CD4-positive, alpha-beta memory T cell (primary cell): ENCODE measurements at regions of chr12 and their contacts with region 1.

Region 1: GRCh38 chr12:76031537-76032073 is at the start of gene PHLDA1:
- DNase-seq: peak; percentile 88 to 95 (median 91)
- H3K4me3 ChIP-seq: peak within 1 kb of the TSS; percentile 69 to 84
- H3K4me3 Mint-ChIP-seq: peak within 1 kb of the TSS; percentile 90 to 98 (median 94)
- H3K27ac ChIP-seq: peak within 1 kb of the TSS; percentile 89
- H3K27ac Mint-ChIP-seq: peak within 1 kb of the TSS; percentile 94 to 98 (median 98)
- H3K4me1 ChIP-seq: peaks cover 24% of the 10 kb centered on the region
- H3K4me1 Mint-ChIP-seq: peaks cover 18 to 45% (median 31%) of the 10 kb centered on the region in 4 donors
- H3K27me3 ChIP-seq: no peaks in the 10 kb centered on the region
- H3K27me3 Mint-ChIP-seq: no peaks in the 10 kb centered on the region
- total RNA-seq, gene PHLDA1: 8.2 to 8.5 TPM

Region 2: DNA sequence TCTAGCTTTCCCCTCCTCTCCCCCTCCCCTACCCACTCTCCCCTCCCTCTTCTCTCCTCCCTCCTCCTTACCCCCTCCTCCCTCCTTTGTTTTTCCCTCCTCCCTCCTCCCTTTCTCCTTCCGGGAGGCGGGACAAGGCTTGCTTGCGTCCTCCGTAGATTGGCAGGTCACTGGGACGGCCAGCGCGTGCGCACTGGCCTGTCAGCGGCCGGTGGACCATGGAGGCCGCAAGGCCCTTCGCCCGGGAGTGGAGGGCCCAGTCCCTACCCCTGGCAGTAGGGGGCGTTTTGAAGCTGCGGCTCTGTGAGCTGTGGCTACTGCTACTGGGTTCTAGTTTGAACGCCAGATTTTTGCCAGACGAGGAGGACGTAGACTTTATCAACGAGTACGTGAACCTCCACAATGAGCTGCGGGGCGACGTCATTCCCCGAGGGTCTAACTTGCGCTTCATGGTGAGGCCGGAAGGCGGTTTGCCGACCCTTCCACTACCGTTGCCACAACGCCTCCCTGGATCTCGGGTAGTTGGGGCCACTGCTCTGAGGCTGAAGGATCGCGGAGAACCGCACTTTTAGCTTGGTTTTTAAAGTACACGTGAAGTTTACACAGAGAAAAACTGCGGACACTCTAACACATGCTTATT is 640.6 kb before region 1 on chr12 and contains the start of gene GLIPR1L2:
- CTCF ChIA-PET with region 1: no interaction called
- POLR2A ChIA-PET with region 1: interaction called, 18 read pairs
- intact Hi-C with region 1: loop called (anchors 5 kb)
- DNase-seq: peak; percentile 82 to 86 (median 84)
- H3K4me3 ChIP-seq: peak within 1 kb of the TSS; percentile 69 to 74
- H3K4me3 Mint-ChIP-seq: peak within 1 kb of the TSS; percentile 90 to 97 (median 93)
- H3K27ac ChIP-seq: peak within 1 kb of the TSS; percentile 74
- H3K27ac Mint-ChIP-seq: peak within 1 kb of the TSS; percentile 96 to 99 (median 97)
- H3K4me1 ChIP-seq: peaks cover 56% of the 10 kb centered on the region
- H3K4me1 Mint-ChIP-seq: peaks cover 38 to 71% (median 51%) of the 10 kb centered on the region in 4 donors
- H3K27me3 ChIP-seq: no peaks in the 10 kb centered on the region
- H3K27me3 Mint-ChIP-seq: no peaks in the 10 kb centered on the region
- total RNA-seq, gene GLIPR1L2: 0.47 to 0.55 TPM

Region 3: DNA sequence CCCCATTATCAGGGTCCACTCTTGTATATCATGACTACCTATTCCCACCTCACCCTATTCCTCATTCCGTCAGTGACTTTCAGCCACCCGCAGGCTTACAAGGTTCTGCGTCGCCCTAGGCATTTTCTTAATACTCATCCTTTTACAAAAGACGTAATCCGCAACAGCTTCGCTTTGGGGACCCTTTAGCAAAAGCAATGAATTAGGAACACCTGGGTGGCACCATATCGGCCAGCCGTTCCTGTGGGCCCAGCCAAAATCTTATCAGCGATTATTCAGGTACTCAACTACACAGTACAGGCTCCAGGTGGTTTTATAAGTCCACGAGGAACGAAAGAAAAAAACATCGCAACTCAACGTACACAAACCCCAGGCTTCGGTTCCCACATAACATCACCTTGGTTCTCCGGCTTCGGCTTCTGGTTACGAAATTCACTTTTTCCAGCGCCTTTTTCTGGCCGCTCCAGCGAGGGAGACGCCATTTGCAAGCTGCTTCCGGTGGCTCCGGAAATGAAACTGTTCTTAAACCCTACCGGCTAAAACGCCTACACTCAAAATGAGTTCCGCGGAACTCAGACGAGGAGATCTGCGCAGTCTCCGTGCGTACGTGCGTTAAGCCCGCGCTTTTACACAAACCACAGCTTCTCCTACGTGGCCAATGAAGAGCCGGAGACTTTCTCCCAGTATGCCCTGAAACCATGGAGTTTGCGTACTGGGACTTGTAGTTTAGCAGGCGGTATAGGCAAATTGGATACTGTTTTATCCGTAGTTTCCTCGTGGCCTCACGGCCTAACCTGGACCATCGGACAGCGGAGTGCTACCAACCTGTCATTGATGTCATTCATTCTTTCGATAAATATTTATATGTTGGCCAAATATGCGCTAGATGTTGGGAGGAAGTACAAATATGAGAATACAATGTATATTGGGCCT is 520.2 kb before region 1 on chr12 and contains the start of gene KRR1:
- CTCF ChIA-PET with region 1: interaction called, 4 read pairs
- POLR2A ChIA-PET with region 1: interaction called, 33 read pairs
- intact Hi-C with region 1: loop called (anchors 1 kb)
- DNase-seq: peak; percentile 88 to 94 (median 92)
- H3K4me3 ChIP-seq: peak within 1 kb of the TSS; percentile 85 to 99
- H3K4me3 Mint-ChIP-seq: peak within 1 kb of the TSS; percentile 99 to 100 (median 100)
- H3K27ac ChIP-seq: peak within 1 kb of the TSS; percentile 94
- H3K27ac Mint-ChIP-seq: peak within 1 kb of the TSS; percentile 98 to 100 (median 100)
- H3K4me1 ChIP-seq: peaks cover 27% of the 10 kb centered on the region
- H3K4me1 Mint-ChIP-seq: peaks cover 25 to 42% (median 31%) of the 10 kb centered on the region in 4 donors
- H3K27me3 ChIP-seq: no peaks in the 10 kb centered on the region
- H3K27me3 Mint-ChIP-seq: no peaks in the 10 kb centered on the region
- total RNA-seq, gene KRR1: 60.7 to 65.0 TPM

Region 4: DNA sequence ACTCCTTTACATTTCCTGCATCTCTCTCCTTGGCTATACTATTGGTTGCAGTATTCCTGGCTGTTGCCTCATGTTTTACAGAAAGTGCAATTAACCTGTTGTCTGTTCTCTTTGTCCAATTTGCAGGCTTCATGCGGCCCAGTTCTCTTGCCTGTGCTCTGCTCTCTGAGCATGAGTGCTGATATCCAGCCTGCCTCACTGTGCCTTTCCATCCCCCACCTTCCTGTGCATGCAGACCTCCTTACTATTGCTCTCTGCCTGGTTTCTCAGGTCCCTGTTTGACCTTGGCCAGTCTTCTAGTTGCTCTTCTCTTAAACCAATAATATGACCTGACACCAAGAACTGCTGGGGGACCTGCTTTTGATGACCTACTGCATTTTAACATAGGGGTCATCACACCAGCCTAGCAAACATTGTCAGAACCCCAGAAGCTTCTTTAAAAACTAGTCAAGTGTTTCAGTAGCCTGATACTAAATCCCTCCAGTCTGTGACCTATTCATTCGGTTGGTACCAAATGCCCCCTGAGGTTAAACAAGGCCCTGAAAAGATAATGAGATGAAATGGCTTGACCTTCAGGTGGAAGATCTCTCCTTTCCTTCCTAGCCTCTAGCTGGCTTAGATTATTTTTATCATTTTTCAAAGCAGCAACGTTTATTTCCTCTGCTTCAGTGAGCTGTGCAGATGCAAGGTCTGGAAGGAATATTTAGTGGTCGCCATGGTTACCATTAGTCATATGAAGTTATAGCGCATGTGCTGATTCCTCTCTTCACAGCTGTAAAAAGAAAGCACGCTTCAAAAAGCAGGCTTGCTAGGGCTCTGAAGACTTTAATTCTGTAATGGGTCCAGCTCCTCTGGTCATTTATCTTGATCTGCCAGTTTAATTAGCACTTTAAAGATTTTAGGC is 216.5 kb before region 1 on chr12:
- CTCF ChIA-PET with region 1: interaction called, 21 read pairs
- POLR2A ChIA-PET with region 1: interaction called, 29 read pairs
- intact Hi-C with region 1: loop called (anchors 1 kb)
- DNase-seq: peak; percentile 39 to 66 (median 59)
- H3K4me3 ChIP-seq: no peak overlapping the region
- H3K4me3 Mint-ChIP-seq: peak overlapping the region in 1 of 8 donors; percentile 36
- H3K27ac ChIP-seq: peak overlapping the region; percentile 39
- H3K27ac Mint-ChIP-seq: peak overlapping the region; percentile 64 to 93 (median 87)
- H3K4me1 ChIP-seq: peaks cover 23% of the 10 kb centered on the region
- H3K4me1 Mint-ChIP-seq: peaks cover 10 to 26% (median 18%) of the 10 kb centered on the region in 4 donors
- H3K27me3 ChIP-seq: no peaks in the 10 kb centered on the region
- H3K27me3 Mint-ChIP-seq: no peaks in the 10 kb centered on the region

Region 5: DNA sequence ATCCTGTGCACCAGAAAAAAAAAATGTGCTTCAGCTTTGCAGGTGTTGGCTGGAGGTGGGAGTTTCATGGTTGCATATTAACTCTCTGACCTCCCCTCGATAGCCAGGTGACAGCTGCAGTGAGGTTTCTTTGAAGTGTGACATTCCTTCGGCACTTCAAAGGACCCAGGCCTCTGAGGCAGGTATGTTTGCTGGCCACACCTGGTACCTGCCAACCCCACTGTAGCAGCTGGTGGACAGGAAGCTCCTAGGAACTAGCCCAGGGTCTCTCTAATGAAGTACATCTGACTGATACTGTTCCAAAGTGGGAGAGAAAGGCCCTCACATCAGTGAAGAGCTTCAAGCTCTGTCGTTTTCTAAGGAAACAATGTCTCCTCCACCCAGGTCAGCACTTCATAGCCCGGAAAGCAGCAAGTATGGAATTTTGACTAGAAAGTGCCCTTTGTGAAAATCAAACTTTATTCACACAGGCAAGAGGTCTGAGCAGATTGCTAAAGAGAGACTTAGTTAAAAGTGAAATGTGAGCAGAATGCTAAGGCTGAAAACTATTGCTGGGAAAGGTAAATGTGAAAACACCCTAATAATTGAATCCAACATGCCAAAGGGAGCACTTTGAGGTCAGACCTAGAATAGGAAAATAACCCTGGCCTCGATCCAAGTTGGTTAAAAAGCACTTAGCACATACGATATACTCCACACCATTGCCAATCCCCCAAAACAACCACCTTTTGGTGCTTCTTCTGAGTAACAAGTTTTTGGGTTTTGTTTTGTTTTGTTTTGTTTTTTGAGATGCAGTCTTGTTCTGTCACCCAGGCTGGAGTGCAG is 71.3 kb before region 1 on chr12:
- CTCF ChIA-PET with region 1: interaction called, 4 read pairs
- POLR2A ChIA-PET with region 1: interaction called, 15 read pairs
- intact Hi-C with region 1: no loop called
- DNase-seq: no peak
- H3K4me3 ChIP-seq: no peak overlapping the region
- H3K4me3 Mint-ChIP-seq: peak overlapping the region in 1 of 8 donors; percentile 9
- H3K27ac ChIP-seq: no peak overlapping the region
- H3K27ac Mint-ChIP-seq: peak overlapping the region in 2 of 7 donors; percentile 32 to 76
- H3K4me1 ChIP-seq: peaks cover 20% of the 10 kb centered on the region
- H3K4me1 Mint-ChIP-seq: peaks cover 17 to 39% (median 25%) of the 10 kb centered on the region in 4 donors
- H3K27me3 ChIP-seq: no peaks in the 10 kb centered on the region
- H3K27me3 Mint-ChIP-seq: no peaks in the 10 kb centered on the region

Region 6: DNA sequence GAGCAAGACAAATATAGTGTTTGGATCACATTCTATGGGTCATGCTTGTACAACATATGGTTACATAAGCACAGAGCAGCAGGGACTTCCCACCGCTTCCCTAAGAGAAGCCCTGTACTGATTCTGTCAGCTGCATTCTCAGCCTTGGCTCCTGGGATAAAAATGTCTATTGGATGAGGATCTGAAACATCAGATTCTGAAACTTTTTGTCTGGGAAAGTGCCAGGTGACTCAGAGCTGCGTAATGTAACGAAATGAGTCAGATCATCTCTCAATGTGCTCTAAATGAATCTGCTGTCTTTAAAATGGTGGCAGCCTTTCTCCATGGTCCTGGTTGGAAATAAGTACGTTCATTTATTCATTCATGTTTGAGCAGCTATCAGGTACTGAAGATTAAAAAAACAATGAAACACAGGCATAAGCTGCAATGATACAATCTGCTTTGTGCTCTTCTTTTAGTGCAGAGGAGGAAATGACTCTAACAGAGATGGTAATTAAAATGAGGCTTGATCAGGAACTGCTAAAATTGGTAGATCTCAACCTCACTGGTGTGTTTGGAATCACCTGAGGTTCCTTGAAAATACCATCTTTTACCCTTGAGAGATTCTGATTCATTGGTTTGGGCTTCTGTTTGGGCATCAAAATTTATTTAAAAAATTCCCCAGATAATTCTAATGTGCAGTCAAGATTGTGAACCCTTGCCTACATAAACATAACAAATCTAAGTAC is 152.0 kb after region 1 on chr12:
- CTCF ChIA-PET with region 1: no interaction called
- POLR2A ChIA-PET with region 1: no interaction called
- intact Hi-C with region 1: no loop called
- DNase-seq: no peak
- H3K4me3 ChIP-seq: no peak overlapping the region
- H3K4me3 Mint-ChIP-seq: no peak overlapping the region
- H3K27ac ChIP-seq: no peak overlapping the region
- H3K27ac Mint-ChIP-seq: no peak overlapping the region
- H3K4me1 ChIP-seq: no peaks in the 10 kb centered on the region
- H3K4me1 Mint-ChIP-seq: no peaks in the 10 kb centered on the region
- H3K27me3 ChIP-seq: no peaks in the 10 kb centered on the region
- H3K27me3 Mint-ChIP-seq: peaks cover 4 to 5% of the 10 kb centered on the region in 2 donors

Region 7: GRCh38 chr12:76559400-76560085 is 527.9 kb after region 1 on chr12 and contains the start of gene OSBPL8:
- CTCF ChIA-PET with region 1: no interaction called
- POLR2A ChIA-PET with region 1: interaction called, 15 read pairs
- intact Hi-C with region 1: no loop called
- DNase-seq: peak; percentile 89 to 94 (median 90)
- H3K4me3 ChIP-seq: peak within 1 kb of the TSS; percentile 95
- H3K4me3 Mint-ChIP-seq: peak within 1 kb of the TSS; percentile 96 to 97 (median 96)
- H3K27ac ChIP-seq: peak within 1 kb of the TSS; percentile 89
- H3K27ac Mint-ChIP-seq: peak within 1 kb of the TSS; percentile 94 to 99 (median 98)
- H3K4me1 ChIP-seq: peaks cover 46% of the 10 kb centered on the region
- H3K4me1 Mint-ChIP-seq: peaks cover 24 to 52% (median 31%) of the 10 kb centered on the region in 4 donors
- H3K27me3 ChIP-seq: no peaks in the 10 kb centered on the region
- H3K27me3 Mint-ChIP-seq: no peaks in the 10 kb centered on the region
- total RNA-seq, gene OSBPL8: 126 to 127 TPM